ENCODE measurements at regions of chr1 and their contacts with region 1.

Region 1: DNA sequence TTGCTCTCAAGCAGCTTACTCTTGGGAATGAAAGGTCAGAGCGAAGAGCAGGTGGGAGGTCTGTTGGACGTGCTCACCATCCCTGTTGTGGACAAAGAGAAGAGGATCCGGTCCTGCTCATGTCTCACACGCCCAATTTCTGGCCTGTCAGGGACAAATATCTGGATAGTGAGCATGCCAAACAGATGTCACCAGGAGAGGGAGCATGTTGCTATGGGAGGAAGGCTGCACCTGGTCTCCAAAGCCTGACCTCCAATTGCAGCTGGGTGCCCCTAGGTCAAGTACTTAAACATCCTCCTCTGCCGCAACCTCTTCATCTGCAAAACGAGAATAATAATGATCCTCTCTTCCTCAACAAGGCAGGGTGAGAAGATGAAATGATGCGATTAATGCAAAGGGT is 53.4 kb downstream of the DMRTA2 start:
- DNase-seq: no peak
- ATAC-seq: no peak
- H3K4me3 ChIP-seq: no peak overlapping the region
- H3K27ac ChIP-seq: no peak overlapping the region
- H3K4me1 ChIP-seq: peaks cover 9% of the 10 kb centered on the region
- H3K27me3 ChIP-seq: no peaks in the 10 kb centered on the region
- CTCF ChIP-seq: no peak
- POLR2A ChIP-seq: no peak

Region 2: DNA sequence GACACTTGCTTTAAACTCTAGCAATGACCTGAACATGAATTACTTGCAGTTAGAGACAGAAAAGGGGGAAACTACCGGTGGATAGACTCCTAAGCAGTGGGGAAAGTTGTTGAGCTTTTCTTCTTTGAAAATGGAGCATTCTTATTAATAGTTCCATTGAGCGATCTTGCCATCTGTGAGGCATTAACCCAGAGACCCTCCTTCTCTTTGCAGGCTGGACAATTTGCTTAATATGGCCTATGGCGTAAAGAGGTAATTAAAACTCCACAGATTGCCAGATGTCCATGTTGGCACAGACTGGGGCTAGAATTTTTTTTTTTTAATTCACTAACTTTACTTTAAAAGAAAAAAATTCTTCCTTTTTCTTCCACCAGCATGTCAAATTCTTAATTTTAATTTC is 172.6 kb before region 1 on chr1:
- intact Hi-C with region 1: no loop called
- DNase-seq: no peak
- ATAC-seq: no peak
- H3K4me3 ChIP-seq: no peak overlapping the region
- H3K27ac ChIP-seq: no peak overlapping the region
- H3K4me1 ChIP-seq: no peaks in the 10 kb centered on the region
- H3K27me3 ChIP-seq: no peaks in the 10 kb centered on the region
- CTCF ChIP-seq: no peak
- POLR2A ChIP-seq: no peak

Region 3: GRCh38 chr1:50605186-50605875 is 235.5 kb after region 1 on chr1:
- intact Hi-C with region 1: loop called (anchors 10 kb)
- DNase-seq: peak in 2 of 4 donors; percentile 22 to 34
- ATAC-seq: no peak
- H3K4me3 ChIP-seq: no peak overlapping the region
- H3K27ac ChIP-seq: no peak overlapping the region
- H3K4me1 ChIP-seq: no peaks in the 10 kb centered on the region
- H3K27me3 ChIP-seq: no peaks in the 10 kb centered on the region
- CTCF ChIP-seq: peak in 6 of 7 experiments; percentile 24 to 49 (median 40)
- POLR2A ChIP-seq: no peak

Measured in body of pancreas (tissue), 4 donors.